Panc1 (cell line): ENCODE measurements at regions of chr12 and their contacts with region 1.

Region 1: GRCh38 chr12:48472259-48472658 is at the start of gene ANP32D:
- DNase-seq: no peak
- ATAC-seq: no peak
- H3K4me3 ChIP-seq: no peak within 1 kb of the TSS
- H3K27ac ChIP-seq: no peak within 1 kb of the TSS
- H3K4me1 ChIP-seq: no peaks in the 10 kb centered on the region
- H3K27me3 ChIP-seq: no peaks in the 10 kb centered on the region
- CTCF ChIP-seq: no peak
- total RNA-seq, gene ANP32D: not detected

Region 2: GRCh38 chr12:48237162-48237561 is 235.1 kb before region 1 on chr12:
- CTCF ChIA-PET with region 1: interaction called, 16 read pairs
- POLR2A ChIA-PET with region 1: no interaction called
- in situ Hi-C with region 1: no loop called
- intact Hi-C with region 1: no loop called
- DNase-seq: no peak
- ATAC-seq: no peak
- H3K4me3 ChIP-seq: no peak overlapping the region
- H3K27ac ChIP-seq: no peak overlapping the region
- H3K4me1 ChIP-seq: no peaks in the 10 kb centered on the region
- H3K27me3 ChIP-seq: peaks cover 6% of the 10 kb centered on the region
- CTCF ChIP-seq: no peak

Region 3: GRCh38 chr12:48910196-48910595 is 437.9 kb after region 1 on chr12:
- CTCF ChIA-PET with region 1: no interaction called
- POLR2A ChIA-PET with region 1: no interaction called
- in situ Hi-C with region 1: no loop called
- intact Hi-C with region 1: no loop called
- DNase-seq: no peak
- ATAC-seq: no peak
- H3K4me3 ChIP-seq: no peak overlapping the region
- H3K27ac ChIP-seq: no peak overlapping the region
- H3K4me1 ChIP-seq: no peaks in the 10 kb centered on the region
- H3K27me3 ChIP-seq: no peaks in the 10 kb centered on the region
- CTCF ChIP-seq: no peak